ENCODE measurements at regions of chrX and their contacts with region 1.

Region 1: GRCh38 chrX:31353095-31353494 is 281.3 kb upstream of the FTHL17 start:
- H3K4me3 ChIP-seq: no peak overlapping the region
- H3K27ac ChIP-seq: peak overlapping the region; percentile 16; the same call in 1 of the 2 replicates
- H3K4me1 ChIP-seq: peaks cover 19% of the 10 kb centered on the region; the same call in 1 of the 2 replicates
- CTCF ChIP-seq: no peak

Region 2: DNA sequence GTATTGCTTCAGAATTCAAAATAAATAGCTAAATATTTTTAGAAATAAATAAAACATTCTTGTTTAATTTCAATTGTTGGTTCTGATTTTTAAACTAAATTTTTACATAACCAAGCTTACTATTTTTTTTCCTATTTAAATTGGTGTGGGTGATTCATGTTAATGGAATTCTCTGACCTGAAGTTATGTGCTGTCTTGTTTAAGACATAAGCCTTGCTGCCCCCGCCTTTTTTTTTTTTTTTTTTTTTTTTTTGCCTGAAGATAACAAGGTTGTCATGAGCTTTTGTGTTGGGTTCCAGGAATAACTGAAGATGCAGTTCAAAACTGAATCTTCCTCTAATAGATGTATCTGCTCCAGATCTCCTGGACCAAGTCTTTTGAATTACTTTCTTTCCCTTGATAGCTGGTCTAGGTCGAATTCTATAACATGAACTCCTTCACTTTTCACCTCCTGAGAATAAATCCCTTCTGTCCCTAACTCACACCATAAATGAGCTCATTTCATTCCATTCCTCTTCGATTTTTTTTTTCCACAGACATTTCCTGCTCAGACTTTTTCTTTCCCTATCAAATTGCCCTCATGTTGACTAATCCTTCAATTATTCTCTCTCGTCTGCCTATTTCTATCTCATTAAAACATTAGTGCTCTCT is 19.8 kb before region 1 on chrX:
- CTCF ChIA-PET with region 1: interaction called, 12 read pairs
- POLR2A ChIA-PET with region 1: interaction called, 4 read pairs
- H3K4me3 ChIP-seq: no peak overlapping the region
- H3K27ac ChIP-seq: no peak overlapping the region
- H3K4me1 ChIP-seq: peaks cover 12% of the 10 kb centered on the region
- CTCF ChIP-seq: no peak

Region 3: GRCh38 chrX:31366041-31366440 is 12.9 kb after region 1 on chrX:
- CTCF ChIA-PET with region 1: no interaction called
- POLR2A ChIA-PET with region 1: no interaction called
- H3K4me3 ChIP-seq: no peak overlapping the region
- H3K27ac ChIP-seq: no peak overlapping the region; the same call in 1 of the 2 replicates
- H3K4me1 ChIP-seq: no peaks in the 10 kb centered on the region
- CTCF ChIP-seq: no peak

Region 4: DNA sequence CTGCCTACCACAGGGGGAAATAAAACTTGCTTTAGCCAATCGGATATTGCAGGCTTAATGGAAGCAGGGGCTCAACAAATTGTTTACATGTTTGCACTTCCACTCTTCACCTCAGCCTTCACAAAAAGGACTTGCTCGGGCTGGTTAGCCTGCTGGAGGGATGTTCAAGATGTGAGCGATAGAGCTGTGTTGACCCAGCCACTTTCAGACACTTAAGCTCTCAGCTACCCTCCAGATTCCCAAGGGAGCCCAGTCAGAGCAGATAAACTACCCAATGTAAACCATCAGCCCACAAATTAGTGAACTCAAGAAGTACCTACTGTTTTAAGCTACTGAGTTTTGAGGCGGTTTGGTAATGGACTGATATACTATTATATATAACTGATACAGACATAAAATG is 227.1 kb after region 1 on chrX:
- CTCF ChIA-PET with region 1: no interaction called
- POLR2A ChIA-PET with region 1: interaction called, 10 read pairs
- H3K4me3 ChIP-seq: no peak overlapping the region
- H3K27ac ChIP-seq: peak overlapping the region; percentile 64
- H3K4me1 ChIP-seq: peaks cover 9% of the 10 kb centered on the region; the same call in 1 of the 2 replicates
- CTCF ChIP-seq: no peak